BJ (cell line): ENCODE measurements at regions of chr2 and their contacts with region 1.

Region 1: DNA sequence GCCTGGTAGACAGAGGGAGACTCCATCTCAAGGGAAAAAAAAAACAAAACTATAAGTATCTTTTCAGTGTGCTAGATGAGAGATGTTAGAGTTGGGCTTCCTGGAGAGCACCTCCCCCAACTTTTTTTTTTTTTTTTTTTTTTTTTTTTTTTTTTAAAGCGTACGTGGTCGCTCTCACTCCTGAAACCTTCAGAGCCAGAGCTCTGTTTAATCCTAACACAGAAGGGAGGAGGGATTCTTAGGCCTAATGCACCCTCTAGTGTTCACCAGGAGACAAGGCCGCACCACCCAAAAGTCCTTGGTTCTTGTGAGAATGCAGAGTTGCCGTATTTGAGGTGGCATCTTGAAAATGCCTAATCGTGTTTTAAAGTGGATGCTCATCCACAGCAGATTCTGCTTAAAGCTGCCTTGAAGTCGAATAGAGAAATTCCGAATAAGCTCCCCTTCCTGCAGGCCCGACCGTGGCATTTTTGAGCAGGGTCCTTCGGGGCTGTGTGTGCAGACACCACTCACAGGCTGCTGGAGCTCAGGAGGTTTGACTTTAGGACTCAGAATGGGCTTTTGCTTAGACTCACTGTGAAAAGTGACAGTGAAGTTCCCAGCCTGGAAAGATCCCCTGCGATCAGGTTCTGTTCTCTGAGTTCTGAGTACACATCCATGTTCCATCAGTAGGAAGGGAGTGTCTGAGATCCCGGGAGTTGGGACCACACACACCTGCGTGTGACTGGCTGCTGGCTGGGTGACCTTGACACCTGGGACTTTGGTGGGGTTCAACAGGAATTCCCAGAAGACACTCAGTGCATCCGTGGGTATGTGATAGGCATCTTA is 252.6 kb downstream of the AGAP1 start:
- DNase-seq: no peak
- H3K4me3 ChIP-seq: no peak overlapping the region
- H3K27me3 ChIP-seq: no peaks in the 10 kb centered on the region
- CTCF ChIP-seq: peak; percentile 84

Region 2: DNA sequence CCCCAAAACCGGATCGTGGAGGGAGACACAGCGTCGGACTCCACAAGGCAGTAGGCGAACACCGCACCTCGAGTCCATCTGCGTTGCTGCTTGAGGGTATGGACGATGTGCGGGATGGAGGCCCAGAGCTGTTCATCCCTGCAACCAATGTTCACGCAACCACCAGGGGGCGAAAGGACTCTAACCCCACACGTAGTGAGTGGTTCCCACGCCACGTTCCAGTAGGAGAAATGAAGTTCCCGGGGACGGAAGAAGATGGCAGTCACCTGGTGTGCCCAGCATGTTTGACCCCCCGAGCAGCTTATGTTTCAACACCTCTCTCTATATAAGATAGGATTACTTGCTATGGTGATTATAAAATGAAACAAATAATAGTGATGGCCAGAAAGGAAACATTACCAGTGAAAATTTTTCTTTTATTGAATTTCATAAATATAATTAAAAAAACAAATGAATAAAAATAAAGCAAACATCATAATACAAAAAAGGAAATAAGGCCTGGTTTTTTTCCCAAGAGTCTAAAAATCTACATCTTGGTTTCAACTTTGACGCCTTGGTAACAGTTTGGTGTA is 610.4 kb before region 1 on chr2:
- CTCF ChIA-PET with region 1: interaction called, 11 read pairs
- POLR2A ChIA-PET with region 1: no interaction called
- DNase-seq: no peak
- H3K4me3 ChIP-seq: no peak overlapping the region
- H3K27me3 ChIP-seq: 0 out of 2 replicates have a peak, but pooled peaks cover 1% of the 10 kb centered on the region
- CTCF ChIP-seq: peak; percentile 85

Region 3: GRCh38 chr2:235472443-235472842 is 274.0 kb before region 1 on chr2:
- CTCF ChIA-PET with region 1: no interaction called
- POLR2A ChIA-PET with region 1: no interaction called
- DNase-seq: no peak
- H3K4me3 ChIP-seq: no peak overlapping the region
- H3K27me3 ChIP-seq: no peaks in the 10 kb centered on the region
- CTCF ChIP-seq: no peak

Region 4: DNA sequence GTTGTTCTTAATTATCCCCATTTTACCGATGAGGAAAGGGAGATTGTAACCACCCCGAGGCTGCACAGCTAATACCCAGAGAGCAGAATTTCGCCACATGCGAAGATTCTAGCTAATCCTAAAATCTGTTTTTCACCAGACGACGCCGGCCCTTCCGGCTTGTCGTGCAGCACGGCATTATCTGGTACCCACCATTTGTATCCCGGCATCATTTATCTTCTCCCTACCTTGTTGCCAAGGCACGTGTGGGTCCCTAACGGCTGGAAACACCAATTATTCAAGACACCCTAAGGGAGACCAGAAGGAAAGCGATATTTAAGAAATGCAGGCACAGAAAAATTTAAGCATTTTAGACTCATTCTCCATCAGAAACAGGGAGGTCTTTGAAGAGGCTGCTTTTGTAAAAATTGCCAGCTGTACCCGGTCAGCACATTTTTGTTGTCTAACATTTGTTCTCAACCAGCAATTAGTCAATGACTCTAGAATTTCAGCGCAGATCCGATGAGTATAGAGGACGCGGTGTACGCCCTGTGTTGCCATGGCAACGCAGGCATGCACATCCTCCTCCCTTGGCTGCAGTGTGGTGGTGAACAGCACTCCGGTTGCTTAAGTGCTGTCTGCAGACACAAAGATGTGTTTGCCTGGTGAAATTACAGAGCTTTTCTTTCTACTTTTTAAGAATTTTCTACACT is 141.0 kb before region 1 on chr2:
- CTCF ChIA-PET with region 1: interaction called, 146 read pairs
- POLR2A ChIA-PET with region 1: no interaction called
- DNase-seq: peak; percentile 91
- H3K4me3 ChIP-seq: 0 out of 2 replicates have a peak overlapping the region, but pooled peaks have one; percentile 14
- H3K27me3 ChIP-seq: no peaks in the 10 kb centered on the region
- CTCF ChIP-seq: no peak

Region 5: GRCh38 chr2:235734688-235735231 is 11.7 kb before region 1 on chr2:
- CTCF ChIA-PET with region 1: interaction called, 14 read pairs
- POLR2A ChIA-PET with region 1: no interaction called
- DNase-seq: no peak
- H3K4me3 ChIP-seq: no peak overlapping the region
- H3K27me3 ChIP-seq: no peaks in the 10 kb centered on the region
- CTCF ChIP-seq: no peak

Region 6: GRCh38 chr2:235940330-235940729 is 193.9 kb after region 1 on chr2:
- CTCF ChIA-PET with region 1: no interaction called
- POLR2A ChIA-PET with region 1: no interaction called
- DNase-seq: peak; percentile 60
- H3K4me3 ChIP-seq: no peak overlapping the region
- H3K27me3 ChIP-seq: no peaks in the 10 kb centered on the region
- CTCF ChIP-seq: no peak

Region 7: DNA sequence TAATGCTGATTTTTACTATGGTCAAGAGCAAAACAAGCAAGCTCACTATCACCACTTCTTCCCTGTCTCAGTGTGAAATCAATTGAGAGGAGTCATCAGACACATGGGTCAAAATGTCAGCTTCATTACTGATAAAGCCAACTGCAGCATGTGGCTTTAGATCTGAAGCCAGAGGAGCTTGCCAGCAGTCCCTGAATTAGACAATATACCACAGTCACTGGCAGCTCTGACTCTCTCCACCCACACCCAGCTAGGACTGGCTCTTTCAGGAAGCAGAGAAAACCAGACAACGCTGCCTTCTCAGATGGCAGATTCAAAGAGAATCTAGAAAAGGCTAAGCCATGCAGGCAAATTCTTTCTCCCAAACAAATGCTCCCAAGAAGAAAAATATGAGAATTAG is 537.7 kb after region 1 on chr2:
- CTCF ChIA-PET with region 1: no interaction called
- POLR2A ChIA-PET with region 1: no interaction called
- DNase-seq: no peak
- H3K4me3 ChIP-seq: no peak overlapping the region
- H3K27me3 ChIP-seq: no peaks in the 10 kb centered on the region; the same call in 1 of the 2 replicates
- CTCF ChIP-seq: no peak